ENCODE measurements at regions of chr1 and their contacts with region 1.

Region 1: GRCh38 chr1:66331657-66332547 is 202.1 kb upstream of the SGIP1 start:
- DNase-seq: peak; percentile 87

Region 2: GRCh38 chr1:66168948-66169671 is 162.8 kb before region 1 on chr1:
- intact Hi-C with region 1: no loop called
- DNase-seq: no peak

Region 3: GRCh38 chr1:66262211-66262963 is 69.5 kb before region 1 on chr1:
- intact Hi-C with region 1: loop called in 1 of 2 experiments (anchors 10 kb)
- DNase-seq: no peak

Region 4: DNA sequence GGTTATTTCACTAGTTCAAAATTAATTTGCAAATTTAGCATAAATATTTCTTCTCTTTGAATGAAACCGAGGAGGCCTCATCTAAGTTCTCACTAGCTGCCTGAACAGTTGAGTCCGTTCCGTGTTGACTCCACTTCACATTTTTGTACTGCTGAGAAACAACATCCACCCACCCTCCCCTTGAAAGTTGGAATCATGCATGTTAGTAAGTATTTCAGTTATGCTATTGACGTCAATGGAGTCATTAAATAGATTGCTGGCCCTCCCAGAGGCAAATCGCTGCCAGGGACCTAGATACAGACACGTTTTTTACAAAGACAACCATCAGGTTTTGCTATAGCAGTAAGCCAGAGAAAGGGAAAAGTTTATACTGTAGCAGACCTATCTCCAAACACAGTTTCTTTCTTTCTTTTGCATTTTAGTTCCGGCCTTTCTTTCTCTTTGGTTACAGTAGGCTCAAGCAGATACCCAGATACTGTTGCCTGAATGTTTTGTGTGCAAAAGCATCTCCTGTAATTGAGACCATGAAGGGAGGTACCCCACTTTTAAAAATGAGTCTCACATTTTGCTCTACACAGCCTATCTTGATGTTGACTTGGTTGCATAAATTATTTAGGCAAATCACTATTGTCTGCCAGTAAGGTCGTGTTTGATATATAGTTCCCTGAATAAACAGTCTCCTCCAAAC is 60.5 kb before region 1 on chr1:
- intact Hi-C with region 1: loop called (anchors 10 kb)
- DNase-seq: peak; percentile 89

Region 5: DNA sequence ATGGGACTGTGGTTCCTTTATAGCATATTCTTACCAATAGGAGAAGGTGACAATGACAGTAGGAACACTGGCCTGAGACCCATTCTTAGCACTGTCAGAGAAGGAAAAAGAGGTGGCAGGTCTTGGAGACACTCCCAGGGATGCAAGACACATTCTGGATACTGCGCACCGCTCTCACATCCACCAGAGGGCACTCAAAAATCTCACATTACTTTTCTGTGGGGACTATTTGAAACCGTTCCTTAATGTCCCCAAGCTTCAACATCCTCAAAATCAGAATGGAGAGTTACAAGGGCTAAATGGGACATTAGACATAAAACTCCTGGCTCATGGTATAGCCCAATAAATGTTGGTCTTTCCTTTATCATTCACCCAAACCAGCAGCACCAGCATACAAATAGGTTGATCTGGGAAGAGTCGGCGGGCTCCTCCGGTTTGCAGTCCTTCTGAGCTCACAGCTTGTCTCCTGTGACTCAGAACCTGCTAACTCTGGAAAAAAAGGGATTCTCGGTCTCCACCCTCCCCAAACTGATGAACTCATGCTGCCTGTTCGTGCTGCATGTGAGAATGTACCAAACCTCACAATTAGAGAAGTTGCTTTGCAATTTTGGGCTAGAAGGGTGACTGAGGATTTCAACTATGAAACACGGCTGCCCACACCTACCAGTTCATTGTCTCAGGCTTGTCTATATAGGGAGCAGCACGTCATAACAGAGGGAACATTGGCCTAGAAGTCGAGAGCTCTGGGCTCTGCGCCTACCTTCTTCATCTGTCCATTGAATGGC is 1016.0 kb after region 1 on chr1:
- intact Hi-C with region 1: loop called in 1 of 2 experiments (anchors 5 kb)
- DNase-seq: no peak